ENCODE measurements at regions of chr5 and their contacts with region 1.

Region 1: GRCh38 chr5:59390074-59390659 is 503.4 kb downstream of the PDE4D start:
- DNase-seq: no peak
- ATAC-seq: no peak
- H3K4me3 ChIP-seq: no peak overlapping the region
- H3K27ac ChIP-seq: no peak overlapping the region
- H3K4me1 ChIP-seq: no peaks in the 10 kb centered on the region
- H3K27me3 ChIP-seq: no peaks in the 10 kb centered on the region
- CTCF ChIP-seq: peak; percentile 27 to 58 (median 44); a peak in 5 of 6 replicates
- EP300 ChIP-seq: no peak
- POLR2A ChIP-seq: no peak
- RAD21 ChIP-seq: peak; percentile 52

Region 2: GRCh38 chr5:59506285-59506877 is 116.2 kb after region 1 on chr5:
- CTCF ChIA-PET with region 1: interaction called, 14 read pairs
- POLR2A ChIA-PET with region 1: no interaction called
- RAD21 ChIA-PET with region 1: interaction called, 5 read pairs
- SMC1A ChIA-PET with region 1: interaction called, 3 read pairs
- in situ Hi-C with region 1: no loop called
- intact Hi-C with region 1: no loop called
- DNase-seq: no peak
- ATAC-seq: peak; percentile 61; the same call in 2 of the 3 replicates
- H3K4me3 ChIP-seq: no peak overlapping the region
- H3K27ac ChIP-seq: no peak overlapping the region
- H3K4me1 ChIP-seq: no peaks in the 10 kb centered on the region
- H3K27me3 ChIP-seq: no peaks in the 10 kb centered on the region
- CTCF ChIP-seq: peak; percentile 10 to 48 (median 31); a peak in 2 of 6 replicates
- EP300 ChIP-seq: no peak
- POLR2A ChIP-seq: no peak
- RAD21 ChIP-seq: peak; percentile 77

Region 3: DNA sequence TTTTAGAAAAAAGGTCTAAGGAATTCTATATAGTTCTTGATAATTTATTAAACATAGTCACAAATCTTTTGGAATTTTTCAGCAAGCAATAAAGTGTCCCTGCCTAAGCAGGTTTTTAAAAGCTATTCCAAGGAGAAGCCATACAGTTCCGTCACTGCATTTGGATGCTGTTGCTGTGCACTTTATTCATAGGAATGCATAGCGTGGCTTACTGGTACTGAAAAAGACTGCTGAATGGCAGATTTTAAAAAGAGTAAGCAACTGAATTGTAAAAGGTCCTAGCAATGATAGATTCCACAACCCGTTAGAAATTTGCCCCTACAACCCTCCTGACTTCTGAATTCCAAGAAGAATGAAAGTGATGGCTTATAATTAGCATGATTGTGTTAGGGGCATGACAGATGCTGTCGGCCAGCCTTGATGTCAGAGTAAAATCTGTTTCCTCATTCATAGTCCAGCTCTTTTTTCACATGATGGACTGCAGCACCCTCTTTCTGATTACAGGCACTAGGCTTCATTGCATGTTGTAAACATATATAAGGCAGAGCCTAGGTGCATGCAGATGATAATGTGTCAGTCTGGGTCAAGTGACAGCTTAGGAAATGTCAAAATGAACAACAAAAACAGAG is 276.4 kb after region 1 on chr5:
- CTCF ChIA-PET with region 1: interaction called, 78 read pairs
- POLR2A ChIA-PET with region 1: no interaction called
- RAD21 ChIA-PET with region 1: interaction called, 4 read pairs
- SMC1A ChIA-PET with region 1: interaction called, 23 read pairs
- in situ Hi-C with region 1: loop called (anchors 5 kb)
- intact Hi-C with region 1: no loop called
- DNase-seq: no peak
- ATAC-seq: peak; percentile 31; the same call in 1 of the 3 replicates
- H3K4me3 ChIP-seq: no peak overlapping the region
- H3K27ac ChIP-seq: no peak overlapping the region
- H3K4me1 ChIP-seq: no peaks in the 10 kb centered on the region
- H3K27me3 ChIP-seq: no peaks in the 10 kb centered on the region
- CTCF ChIP-seq: no peak; a peak in 1 of 6 replicates
- EP300 ChIP-seq: no peak
- POLR2A ChIP-seq: no peak
- RAD21 ChIP-seq: 0 out of 2 replicates have a peak, but pooled peaks have one; percentile 18

Region 4: DNA sequence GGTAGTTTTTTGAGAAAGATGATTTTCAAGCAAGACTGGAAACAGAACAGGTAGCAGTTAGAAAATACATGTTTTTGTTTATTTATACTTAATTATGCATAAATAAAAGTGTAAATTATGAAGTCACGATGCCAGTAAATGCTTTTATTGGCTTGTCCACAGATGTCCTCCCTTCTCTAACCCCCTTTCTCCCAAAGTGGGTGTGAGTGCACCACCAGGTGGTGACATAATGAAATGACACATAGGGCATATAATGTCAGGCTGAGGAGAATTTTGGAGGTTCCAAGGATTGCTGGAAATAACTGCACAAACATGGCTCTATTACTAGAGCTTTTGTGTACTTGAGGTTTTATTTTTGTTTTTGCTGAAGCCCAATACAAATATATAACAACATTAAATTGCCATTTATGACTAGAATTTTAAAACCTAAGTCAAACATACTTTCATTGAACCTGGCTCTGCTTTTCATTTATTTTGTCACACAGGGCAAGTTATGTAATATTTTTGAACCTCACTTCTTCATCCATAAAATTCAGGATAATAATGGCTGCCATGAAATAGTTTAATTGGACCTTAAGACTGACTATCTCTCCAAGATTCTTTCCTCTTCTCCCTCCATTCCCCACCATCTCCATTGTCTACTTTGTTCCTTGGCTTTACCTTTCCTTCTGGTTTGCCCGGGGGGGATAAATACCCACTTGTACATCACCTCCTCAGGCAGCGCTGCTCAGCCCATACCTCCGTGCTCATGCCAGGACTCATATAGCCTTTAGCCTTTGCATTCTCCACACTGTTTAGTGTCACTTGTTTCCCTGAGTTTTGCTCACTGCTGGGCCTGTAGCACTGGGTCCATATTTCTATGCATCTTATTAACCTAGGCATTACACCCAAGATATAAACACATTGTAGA is 334.6 kb after region 1 on chr5:
- CTCF ChIA-PET with region 1: interaction called, 4 read pairs
- POLR2A ChIA-PET with region 1: no interaction called
- RAD21 ChIA-PET with region 1: no interaction called
- SMC1A ChIA-PET with region 1: interaction called, 3 read pairs
- in situ Hi-C with region 1: no loop called
- intact Hi-C with region 1: loop called (anchors 1 kb)
- DNase-seq: no peak
- ATAC-seq: peak; percentile 91
- H3K4me3 ChIP-seq: no peak overlapping the region
- H3K27ac ChIP-seq: no peak overlapping the region
- H3K4me1 ChIP-seq: no peaks in the 10 kb centered on the region
- H3K27me3 ChIP-seq: no peaks in the 10 kb centered on the region
- CTCF ChIP-seq: peak; percentile 68 to 73 (median 71)
- EP300 ChIP-seq: no peak
- POLR2A ChIP-seq: no peak
- RAD21 ChIP-seq: peak; percentile 80

Measured in GM12878 (cell line).